Aorta (tissue), 5 donors: ENCODE measurements at regions of chr3 and their contacts with region 1.

Region 1: DNA sequence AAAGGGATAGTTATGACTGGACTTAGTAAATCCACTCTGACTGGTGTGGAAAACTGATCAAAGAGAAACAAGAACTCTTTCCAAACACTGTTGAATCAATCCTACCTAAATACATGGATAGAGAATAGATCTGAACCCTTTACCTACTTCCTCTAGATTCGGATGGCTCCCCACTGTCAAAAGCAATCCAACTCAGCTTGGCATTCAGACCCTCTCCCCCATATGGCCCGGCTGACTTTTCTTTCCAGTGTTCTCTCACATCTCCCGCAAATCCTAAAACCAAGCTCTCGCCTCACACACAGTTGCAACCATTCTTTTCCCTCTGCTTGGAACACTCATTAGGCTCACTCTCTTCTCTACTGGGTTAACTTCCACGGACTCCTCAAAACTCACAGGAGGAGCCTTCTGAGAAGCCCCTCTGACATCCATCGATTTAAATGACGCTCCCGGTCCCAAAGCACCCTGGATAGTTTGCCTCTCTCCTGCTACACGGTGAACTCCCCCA is 639 bp downstream of the SPICE1 start:
- DNase-seq: no peak
- ATAC-seq: peak; percentile 24
- H3K4me3 ChIP-seq: peak overlapping the region; percentile 54 to 58
- H3K27ac ChIP-seq: peak overlapping the region in 1 of 2 donors; percentile 0
- H3K4me1 ChIP-seq: no peaks in the 10 kb centered on the region
- H3K27me3 ChIP-seq: no peaks in the 10 kb centered on the region

Region 2: GRCh38 chr3:112582244-112582874 is 932.0 kb before region 1 on chr3:
- intact Hi-C with region 1: no loop called
- DNase-seq: no peak
- ATAC-seq: no peak
- H3K4me3 ChIP-seq: no peak overlapping the region
- H3K27ac ChIP-seq: no peak overlapping the region
- H3K4me1 ChIP-seq: no peaks in the 10 kb centered on the region
- H3K27me3 ChIP-seq: no peaks in the 10 kb centered on the region

Region 3: GRCh38 chr3:113648524-113648923 is 134.2 kb after region 1 on chr3:
- intact Hi-C with region 1: no loop called
- DNase-seq: no peak
- ATAC-seq: no peak
- H3K4me3 ChIP-seq: no peak overlapping the region
- H3K27ac ChIP-seq: no peak overlapping the region
- H3K4me1 ChIP-seq: no peaks in the 10 kb centered on the region
- H3K27me3 ChIP-seq: no peaks in the 10 kb centered on the region

Region 4: DNA sequence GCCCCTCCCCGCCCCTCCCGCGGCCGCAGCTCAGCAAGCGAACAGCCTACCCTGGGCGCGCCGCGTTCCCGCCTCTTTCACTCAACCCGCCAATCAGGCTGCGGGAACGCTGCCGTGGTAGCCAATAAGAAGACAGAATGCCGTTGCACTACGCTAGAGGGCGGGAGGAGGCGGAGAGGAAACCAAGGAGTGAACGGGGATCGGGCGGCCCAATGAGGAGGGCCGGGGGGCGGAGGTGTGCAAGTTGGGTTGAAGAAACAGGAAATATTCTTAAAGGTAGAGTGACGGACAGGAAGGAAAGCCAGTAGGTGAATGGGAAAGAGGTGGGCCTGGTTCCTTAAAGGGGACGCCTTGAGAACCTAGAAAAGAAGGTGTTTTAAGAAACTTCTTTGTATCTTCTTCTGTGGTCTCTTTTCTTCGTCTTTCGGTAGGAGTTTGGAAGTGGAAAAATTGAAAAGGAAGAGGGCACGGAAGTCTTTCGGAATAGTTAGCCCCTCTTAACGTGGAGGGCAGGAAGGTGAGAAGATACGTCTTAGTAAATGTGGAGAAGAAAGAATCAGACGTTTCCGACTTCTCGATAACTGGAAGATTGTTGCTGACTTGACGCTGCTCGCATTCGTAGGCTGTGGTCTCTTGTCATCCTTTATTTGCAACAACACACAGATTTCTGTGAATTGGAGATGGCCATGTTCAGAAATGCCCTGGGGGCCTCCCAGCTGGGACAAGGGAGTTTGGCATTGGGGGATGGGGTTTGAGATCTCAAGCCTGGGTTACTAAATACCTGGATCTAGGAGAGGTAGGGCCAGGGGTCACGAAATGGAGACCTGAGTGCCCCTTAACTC is 182.6 kb after region 1 on chr3:
- intact Hi-C with region 1: loop called in 1 of 2 experiments (anchors 10 kb)
- DNase-seq: peak; percentile 99 to 100
- ATAC-seq: peak; percentile 98
- H3K4me3 ChIP-seq: peak overlapping the region; percentile 78 to 88
- H3K27ac ChIP-seq: peak overlapping the region; percentile 50 to 65
- H3K4me1 ChIP-seq: peaks cover 0 to 8% of the 10 kb centered on the region in 2 donors
- H3K27me3 ChIP-seq: no peaks in the 10 kb centered on the region